ENCODE measurements at regions of chr14 and their contacts with region 1.

Region 1: DNA sequence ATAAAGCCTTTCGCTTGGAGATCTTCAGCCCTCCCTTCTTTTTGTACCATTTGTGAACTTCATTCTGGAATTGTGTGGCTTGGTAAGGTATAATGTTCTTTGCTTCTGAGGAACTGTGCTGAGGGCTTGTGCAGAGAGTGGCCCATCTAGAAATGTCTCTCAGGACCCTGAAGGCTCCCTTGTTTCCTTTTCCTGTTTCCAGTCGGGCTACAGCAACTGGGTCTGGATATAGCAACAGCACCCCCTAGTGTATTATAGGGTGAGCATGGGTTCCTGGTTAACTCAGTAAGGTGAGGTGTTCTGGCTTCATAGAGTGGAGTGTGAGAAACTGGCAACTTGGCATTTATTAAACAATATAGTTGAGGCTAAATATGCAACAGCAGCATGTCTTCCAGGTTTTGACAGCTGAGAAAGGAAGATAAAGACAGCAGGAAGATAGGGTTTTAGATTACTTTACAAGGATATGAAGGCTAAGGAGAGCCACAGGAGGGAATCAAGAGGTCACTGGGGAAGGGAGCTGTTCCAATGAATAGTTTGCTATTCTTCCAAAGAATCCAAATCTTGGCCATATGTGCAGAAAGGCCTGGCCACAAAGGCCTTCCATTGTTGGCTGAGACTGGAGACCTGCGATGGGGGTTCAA is 49.1 kb upstream of the RNU6-8 start:
- DNase-seq: peak in 1 of 2 donors; percentile 80
- ATAC-seq: peak; percentile 77 to 94 (median 82)
- H3K4me3 ChIP-seq: no peak overlapping the region
- H3K4me3 Mint-ChIP-seq: no peak overlapping the region
- H3K27ac ChIP-seq: no peak overlapping the region
- H3K27ac Mint-ChIP-seq: no peak overlapping the region
- H3K4me1 ChIP-seq: no peaks in the 10 kb centered on the region
- H3K4me1 Mint-ChIP-seq: no peaks in the 10 kb centered on the region
- H3K27me3 ChIP-seq: no peaks in the 10 kb centered on the region
- H3K27me3 Mint-ChIP-seq: no peaks in the 10 kb centered on the region
- CTCF ChIP-seq: peak; percentile 70

Region 2: GRCh38 chr14:31510222-31510621 is 741.9 kb before region 1 on chr14:
- intact Hi-C with region 1: loop called (anchors 1 kb)
- DNase-seq: peak in 1 of 2 donors; percentile 42
- ATAC-seq: no peak
- H3K4me3 ChIP-seq: no peak overlapping the region
- H3K4me3 Mint-ChIP-seq: no peak overlapping the region
- H3K27ac ChIP-seq: no peak overlapping the region
- H3K27ac Mint-ChIP-seq: no peak overlapping the region
- H3K4me1 ChIP-seq: no peaks in the 10 kb centered on the region
- H3K4me1 Mint-ChIP-seq: no peaks in the 10 kb centered on the region
- H3K27me3 ChIP-seq: no peaks in the 10 kb centered on the region
- H3K27me3 Mint-ChIP-seq: peaks cover 3 to 7% of the 10 kb centered on the region in 2 donors
- CTCF ChIP-seq: peak; percentile 68

Region 3: GRCh38 chr14:32393118-32393517 is 141.0 kb after region 1 on chr14:
- intact Hi-C with region 1: no loop called
- DNase-seq: no peak
- ATAC-seq: no peak
- H3K4me3 ChIP-seq: no peak overlapping the region
- H3K4me3 Mint-ChIP-seq: no peak overlapping the region
- H3K27ac ChIP-seq: no peak overlapping the region
- H3K27ac Mint-ChIP-seq: no peak overlapping the region
- H3K4me1 ChIP-seq: no peaks in the 10 kb centered on the region
- H3K4me1 Mint-ChIP-seq: no peaks in the 10 kb centered on the region
- H3K27me3 ChIP-seq: no peaks in the 10 kb centered on the region
- H3K27me3 Mint-ChIP-seq: peaks cover 0 to 6% of the 10 kb centered on the region in 2 donors
- CTCF ChIP-seq: no peak